ENCODE measurements at regions of chr7 and their contacts with region 1.

Region 1: GRCh38 chr7:44914992-44915607 is 29.8 kb upstream of the PURB start:
- DNase-seq: peak; percentile 95
- H3K4me3 Mint-ChIP-seq: peak overlapping the region; percentile 45
- H3K27ac Mint-ChIP-seq: peak overlapping the region; percentile 85
- H3K4me1 Mint-ChIP-seq: peaks cover 16% of the 10 kb centered on the region
- H3K27me3 Mint-ChIP-seq: no peaks in the 10 kb centered on the region

Region 2: GRCh38 chr7:44858161-44858560 is 56.9 kb before region 1 on chr7:
- intact Hi-C with region 1: loop called (anchors 2 kb)
- DNase-seq: no peak
- H3K4me3 Mint-ChIP-seq: no peak overlapping the region
- H3K27ac Mint-ChIP-seq: no peak overlapping the region
- H3K4me1 Mint-ChIP-seq: peaks cover 15% of the 10 kb centered on the region
- H3K27me3 Mint-ChIP-seq: peaks cover 3% of the 10 kb centered on the region

Region 3: GRCh38 chr7:44891372-44891771 is 23.7 kb before region 1 on chr7:
- intact Hi-C with region 1: loop called (anchors 1 kb)
- DNase-seq: peak; percentile 82
- H3K4me3 Mint-ChIP-seq: peak overlapping the region; percentile 47
- H3K27ac Mint-ChIP-seq: peak overlapping the region; percentile 94
- H3K4me1 Mint-ChIP-seq: peaks cover 38% of the 10 kb centered on the region
- H3K27me3 Mint-ChIP-seq: no peaks in the 10 kb centered on the region

Region 4: DNA sequence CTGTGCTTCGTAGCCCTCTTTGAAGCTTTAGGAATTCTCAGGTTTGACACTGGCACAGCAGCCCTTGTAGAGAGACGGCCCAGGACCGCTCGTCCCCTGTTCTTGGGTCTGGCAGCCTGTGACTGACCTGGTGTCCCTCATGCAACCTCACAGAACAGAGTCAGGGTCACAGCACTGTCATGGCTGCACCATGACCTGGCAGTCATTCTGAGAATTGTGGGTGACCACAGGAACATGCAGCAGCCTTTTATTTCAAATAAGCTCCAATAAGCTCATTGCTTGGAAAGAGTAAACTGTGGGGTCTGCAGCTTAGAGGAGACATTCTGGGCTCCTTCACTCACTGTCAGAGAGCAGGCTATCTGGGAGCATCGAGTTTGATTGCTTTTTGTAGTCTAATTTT is 21.2 kb after region 1 on chr7:
- intact Hi-C with region 1: no loop called
- DNase-seq: no peak
- H3K4me3 Mint-ChIP-seq: no peak overlapping the region
- H3K27ac Mint-ChIP-seq: no peak overlapping the region
- H3K4me1 Mint-ChIP-seq: no peaks in the 10 kb centered on the region
- H3K27me3 Mint-ChIP-seq: peaks cover 27% of the 10 kb centered on the region

Region 5: DNA sequence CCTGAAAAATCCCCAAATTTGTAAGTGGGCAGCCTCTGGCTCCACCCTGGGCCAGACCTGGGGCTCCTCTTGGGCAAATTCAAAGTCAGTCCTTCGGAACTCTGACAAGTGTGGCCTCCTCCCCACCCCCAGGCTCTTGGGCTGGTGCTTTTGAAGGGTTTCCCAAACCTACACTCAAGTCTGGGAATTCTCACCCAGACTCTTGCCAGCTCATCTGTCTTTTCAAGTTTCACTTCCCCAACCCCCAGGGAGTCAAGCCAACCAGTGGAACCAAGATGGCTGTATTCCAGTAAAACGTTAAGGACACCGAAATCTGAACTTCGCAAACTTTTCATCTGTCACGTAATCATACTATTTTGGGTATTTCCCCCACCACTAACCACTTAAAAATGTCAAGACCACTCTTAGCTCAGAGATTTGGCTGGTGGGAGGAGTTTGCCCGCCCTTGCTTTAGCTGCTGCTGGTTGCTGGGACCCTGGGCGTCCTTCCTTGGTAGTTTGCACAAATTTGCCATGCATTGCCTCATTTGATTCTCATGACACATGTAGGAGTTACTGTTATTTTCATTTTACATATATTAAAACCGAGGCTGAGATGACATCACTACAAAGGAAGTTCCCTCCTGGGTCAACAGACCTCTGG is 65.4 kb after region 1 on chr7:
- intact Hi-C with region 1: loop called (anchors 2 kb)
- DNase-seq: peak; percentile 89
- H3K4me3 Mint-ChIP-seq: peak overlapping the region; percentile 93
- H3K27ac Mint-ChIP-seq: peak overlapping the region; percentile 90
- H3K4me1 Mint-ChIP-seq: peaks cover 63% of the 10 kb centered on the region
- H3K27me3 Mint-ChIP-seq: no peaks in the 10 kb centered on the region

Measured in activated CD4-positive, alpha-beta T cell treated with anti-CD3 and anti-CD28 coated beads, Interleukin-2, amount 10 ng/mL, durations not matched to agents 24 days and 14 days (primary cell).